GM12878 (cell line): ENCODE measurements at regions of chr20 and their contacts with region 1.

Region 1: GRCh38 chr20:38645980-38646858 is 44.6 kb downstream of the ARHGAP40 start:
- DNase-seq: peak; percentile 25
- ATAC-seq: peak; percentile 97
- H3K4me3 ChIP-seq: no peak overlapping the region; the same call in 1 of the 2 replicates
- H3K27ac ChIP-seq: no peak overlapping the region
- H3K4me1 ChIP-seq: no peaks in the 10 kb centered on the region; the same call in none of the 2 replicates
- H3K27me3 ChIP-seq: peaks cover 0 to 3% of the 10 kb centered on the region in 2 experiments; a peak in 2 of 4 replicates
- CTCF ChIP-seq: peak; percentile 89 to 97 (median 96)
- EP300 ChIP-seq: no peak
- POLR2A ChIP-seq: no peak
- RAD21 ChIP-seq: peak; percentile 94

Region 2: GRCh38 chr20:38581013-38581412 is 65.2 kb before region 1 on chr20 and contains the start of gene ADIG:
- CTCF ChIA-PET with region 1: no interaction called
- POLR2A ChIA-PET with region 1: no interaction called
- RAD21 ChIA-PET with region 1: no interaction called
- SMC1A ChIA-PET with region 1: no interaction called
- in situ Hi-C with region 1: no loop called
- intact Hi-C with region 1: no loop called
- DNase-seq: no peak
- ATAC-seq: peak; percentile 40
- H3K4me3 ChIP-seq: no peak within 1 kb of the TSS
- H3K27ac ChIP-seq: no peak within 1 kb of the TSS
- H3K4me1 ChIP-seq: no peaks in the 10 kb centered on the region
- H3K27me3 ChIP-seq: peaks cover 0 to 2% of the 10 kb centered on the region in 2 experiments; a peak in 2 of 4 replicates
- CTCF ChIP-seq: no peak
- EP300 ChIP-seq: no peak
- POLR2A ChIP-seq: no peak
- RAD21 ChIP-seq: no peak
- polyA plus RNA-seq, gene ADIG: not detected

Region 3: GRCh38 chr20:38658879-38659596 is 12.8 kb after region 1 on chr20:
- CTCF ChIA-PET with region 1: interaction called, 20 read pairs
- POLR2A ChIA-PET with region 1: interaction called, 3 read pairs
- RAD21 ChIA-PET with region 1: no interaction called
- SMC1A ChIA-PET with region 1: no interaction called
- in situ Hi-C with region 1: no loop called
- intact Hi-C with region 1: no loop called
- DNase-seq: no peak
- ATAC-seq: peak; percentile 95
- H3K4me3 ChIP-seq: no peak overlapping the region
- H3K27ac ChIP-seq: no peak overlapping the region
- H3K4me1 ChIP-seq: no peaks in the 10 kb centered on the region
- H3K27me3 ChIP-seq: peaks cover 0 to 2% of the 10 kb centered on the region in 2 experiments; a peak in 3 of 4 replicates
- CTCF ChIP-seq: peak; percentile 64 to 78 (median 77)
- EP300 ChIP-seq: no peak
- POLR2A ChIP-seq: no peak
- RAD21 ChIP-seq: peak; percentile 52

Region 4: DNA sequence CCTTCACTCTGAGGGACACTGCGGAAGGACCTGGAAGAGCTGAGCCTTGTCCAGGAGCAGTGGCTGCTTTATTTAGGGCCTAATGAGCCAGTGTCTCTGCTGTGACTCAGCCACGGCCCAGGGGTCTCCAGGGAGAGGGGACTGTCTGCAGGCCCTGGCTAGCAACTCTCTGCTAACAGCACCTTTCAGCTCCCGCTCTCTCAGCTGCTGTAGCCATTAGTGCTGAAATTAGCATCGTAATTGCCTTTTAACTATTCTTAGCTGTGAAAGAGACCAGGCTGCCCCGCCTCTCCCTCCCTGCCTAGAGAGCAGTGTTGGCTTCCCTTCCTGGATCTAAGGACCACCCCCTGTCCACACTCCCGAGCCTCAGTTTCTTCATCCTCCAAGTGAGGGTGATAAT is 25.0 kb after region 1 on chr20:
- CTCF ChIA-PET with region 1: no interaction called
- POLR2A ChIA-PET with region 1: no interaction called
- RAD21 ChIA-PET with region 1: no interaction called
- SMC1A ChIA-PET with region 1: no interaction called
- in situ Hi-C with region 1: no loop called
- intact Hi-C with region 1: no loop called
- DNase-seq: no peak
- ATAC-seq: no peak
- H3K4me3 ChIP-seq: no peak overlapping the region
- H3K27ac ChIP-seq: no peak overlapping the region
- H3K4me1 ChIP-seq: peaks cover 4% of the 10 kb centered on the region; the same call in 1 of the 2 replicates
- H3K27me3 ChIP-seq: peaks cover 2 to 11% of the 10 kb centered on the region in 2 experiments
- CTCF ChIP-seq: no peak
- EP300 ChIP-seq: no peak
- POLR2A ChIP-seq: no peak
- RAD21 ChIP-seq: no peak

Region 5: DNA sequence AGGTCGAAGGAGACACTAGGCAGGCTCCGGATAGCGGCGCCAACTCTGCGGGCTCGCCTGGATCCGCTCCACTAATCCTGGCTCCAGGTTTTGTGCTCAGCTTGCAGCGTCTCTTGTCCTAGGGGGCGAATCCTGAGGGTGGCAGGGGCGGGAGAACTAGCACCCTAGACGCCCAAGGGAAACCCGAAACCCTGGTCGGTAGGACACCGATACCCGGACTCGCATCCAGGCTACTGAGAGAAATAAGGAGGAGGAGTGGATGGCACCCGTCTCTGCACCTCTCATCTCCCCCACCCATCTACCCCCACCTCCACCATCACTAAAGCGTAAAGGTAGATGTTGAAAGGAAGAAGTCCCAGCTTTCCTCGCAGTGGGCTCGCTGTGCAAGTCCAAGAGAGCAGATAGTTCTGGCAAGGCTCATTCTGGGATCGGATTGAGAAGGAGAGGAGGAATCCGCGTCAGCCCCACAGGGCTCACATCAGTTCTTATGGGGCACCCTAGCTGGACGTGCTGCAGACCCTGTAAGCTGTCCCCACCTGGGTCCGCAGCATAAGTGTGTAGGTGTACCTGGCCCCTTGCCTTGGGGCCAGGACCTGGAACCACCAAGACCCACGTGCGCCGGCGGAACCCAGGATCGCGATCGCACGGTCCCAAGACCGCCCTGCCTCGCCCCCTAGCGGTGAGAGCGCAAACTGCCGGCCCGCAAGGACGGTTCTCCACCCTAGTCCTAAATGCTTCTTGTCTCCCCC is 84.9 kb after region 1 on chr20:
- CTCF ChIA-PET with region 1: interaction called, 7 read pairs
- POLR2A ChIA-PET with region 1: no interaction called
- RAD21 ChIA-PET with region 1: interaction called, 4 read pairs
- SMC1A ChIA-PET with region 1: no interaction called
- in situ Hi-C with region 1: no loop called
- intact Hi-C with region 1: loop called (anchors 2 kb)
- DNase-seq: no peak
- ATAC-seq: peak; percentile 94
- H3K4me3 ChIP-seq: peak overlapping the region; percentile 35; the same call in 1 of the 2 replicates
- H3K27ac ChIP-seq: no peak overlapping the region
- H3K4me1 ChIP-seq: peaks cover 8% of the 10 kb centered on the region
- H3K27me3 ChIP-seq: peaks cover 28 to 53% of the 10 kb centered on the region in 2 experiments
- CTCF ChIP-seq: peak; percentile 87 to 99 (median 98)
- EP300 ChIP-seq: no peak
- POLR2A ChIP-seq: no peak
- RAD21 ChIP-seq: peak; percentile 53

Region 6: GRCh38 chr20:38926142-38926933 is 280.1 kb after region 1 on chr20 and contains the start of gene FAM83D:
- CTCF ChIA-PET with region 1: interaction called, 7 read pairs
- POLR2A ChIA-PET with region 1: no interaction called
- RAD21 ChIA-PET with region 1: interaction called, 3 read pairs
- SMC1A ChIA-PET with region 1: interaction called, 7 read pairs
- in situ Hi-C with region 1: no loop called
- intact Hi-C with region 1: loop called (anchors 5 kb)
- DNase-seq: peak; percentile 92
- ATAC-seq: peak; percentile 96
- H3K4me3 ChIP-seq: peak within 1 kb of the TSS; percentile 78
- H3K27ac ChIP-seq: peak within 1 kb of the TSS; percentile 78
- H3K4me1 ChIP-seq: peaks cover 12% of the 10 kb centered on the region
- H3K27me3 ChIP-seq: no peaks in the 10 kb centered on the region
- CTCF ChIP-seq: no peak; a peak in 2 of 6 replicates
- EP300 ChIP-seq: no peak
- POLR2A ChIP-seq: peak; percentile 99
- RAD21 ChIP-seq: no peak; the same call in 1 of the 2 replicates
- polyA plus RNA-seq, gene FAM83D: 4.5 to 6.0 TPM

Region 7: DNA sequence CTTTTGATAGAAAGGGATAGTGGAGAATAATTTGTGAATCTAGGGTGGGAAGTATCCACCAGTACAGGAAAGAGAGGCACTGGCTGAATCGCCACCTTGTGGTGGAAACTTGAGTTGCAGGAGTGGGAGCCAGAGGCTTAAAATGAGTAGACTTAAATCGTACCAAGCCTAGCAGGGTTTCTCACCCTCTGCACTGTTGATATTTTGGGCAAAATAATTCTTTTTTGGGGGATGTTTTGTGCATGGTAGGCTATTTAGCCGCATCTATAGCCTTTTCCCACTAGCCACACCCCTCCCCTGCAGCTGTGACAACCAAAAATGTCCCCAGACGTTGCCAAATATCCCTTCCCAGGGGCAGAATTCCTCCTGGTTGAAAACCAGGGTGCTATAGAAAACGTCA is 435.0 kb after region 1 on chr20:
- CTCF ChIA-PET with region 1: interaction called, 3 read pairs
- POLR2A ChIA-PET with region 1: no interaction called
- RAD21 ChIA-PET with region 1: interaction called, 3 read pairs
- SMC1A ChIA-PET with region 1: interaction called, 3 read pairs
- in situ Hi-C with region 1: no loop called
- intact Hi-C with region 1: loop called (anchors 1 kb)
- DNase-seq: peak; percentile 33
- ATAC-seq: peak; percentile 97
- H3K4me3 ChIP-seq: no peak overlapping the region
- H3K27ac ChIP-seq: no peak overlapping the region
- H3K4me1 ChIP-seq: no peaks in the 10 kb centered on the region
- H3K27me3 ChIP-seq: peaks cover 0 to 5% of the 10 kb centered on the region in 2 experiments; a peak in 2 of 4 replicates
- CTCF ChIP-seq: peak; percentile 87 to 92 (median 89)
- EP300 ChIP-seq: no peak
- POLR2A ChIP-seq: no peak
- RAD21 ChIP-seq: peak; percentile 64